ENCODE measurements at regions of chr18 and their contacts with region 1.

Region 1: DNA sequence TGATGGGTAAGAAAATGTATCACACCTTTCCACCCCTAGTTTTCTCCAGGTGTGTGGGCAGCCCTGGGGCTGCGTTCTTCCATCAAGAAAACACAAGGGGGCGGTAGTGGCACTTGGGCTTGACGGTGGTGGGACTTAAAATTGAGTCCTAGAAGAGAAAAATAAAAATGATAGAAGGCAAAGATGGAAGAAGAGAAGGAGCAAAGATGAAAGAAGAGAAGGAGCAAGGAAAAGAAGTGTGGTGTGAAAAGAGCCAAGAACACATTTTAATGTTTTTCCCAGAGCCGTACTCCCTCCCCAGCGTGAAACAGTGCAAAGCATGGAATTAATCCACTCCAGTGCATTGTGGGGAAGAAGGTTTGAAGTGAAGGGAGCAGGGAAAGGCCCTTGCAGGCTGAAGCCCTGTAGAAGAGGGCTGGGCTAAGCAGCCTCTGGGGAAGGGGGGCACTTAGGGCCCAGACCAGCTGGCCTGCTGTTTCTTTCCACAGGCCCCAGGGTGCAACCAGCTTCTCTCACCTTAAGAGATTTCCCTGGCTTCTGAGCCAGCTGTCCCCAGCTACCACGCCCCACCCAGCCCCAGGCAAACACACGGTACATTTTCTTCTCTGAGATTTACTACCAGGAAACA is 256.8 kb downstream of the RNF152 start:
- DNase-seq: peak; percentile 7 to 35 (median 31)
- H3K4me3 ChIP-seq: no peak overlapping the region
- H3K4me3 Mint-ChIP-seq: no peak overlapping the region
- H3K27ac ChIP-seq: no peak overlapping the region
- H3K27ac Mint-ChIP-seq: no peak overlapping the region
- H3K4me1 ChIP-seq: no peaks in the 10 kb centered on the region
- H3K4me1 Mint-ChIP-seq: no peaks in the 10 kb centered on the region
- H3K27me3 ChIP-seq: peaks cover 0 to 2% of the 10 kb centered on the region in 2 donors
- H3K27me3 Mint-ChIP-seq: peaks cover 0 to 14% (median 4%) of the 10 kb centered on the region in 3 donors
- CTCF ChIP-seq: peak; percentile 84

Region 2: DNA sequence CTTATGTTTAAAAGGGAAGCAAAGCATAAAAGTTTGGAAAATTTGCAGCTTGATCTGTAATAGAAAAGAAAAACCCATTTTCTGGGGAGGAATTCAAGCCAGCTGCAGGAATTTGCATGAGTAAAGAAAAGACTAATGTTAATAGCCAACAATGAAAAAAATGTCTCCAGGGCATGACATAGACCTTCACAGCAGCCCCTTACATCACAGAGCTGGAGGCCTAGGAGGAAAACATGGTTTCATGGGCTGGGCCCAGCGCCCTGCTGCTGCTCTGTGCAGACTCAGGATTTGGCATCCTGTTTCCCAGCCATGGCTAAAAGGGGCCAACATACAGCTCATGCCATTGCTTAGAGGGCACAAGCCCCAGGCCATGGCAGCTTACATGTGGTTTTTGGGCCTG is 851.9 kb before region 1 on chr18:
- intact Hi-C with region 1: no loop called
- DNase-seq: no peak
- H3K4me3 ChIP-seq: no peak overlapping the region
- H3K4me3 Mint-ChIP-seq: no peak overlapping the region
- H3K27ac ChIP-seq: no peak overlapping the region
- H3K27ac Mint-ChIP-seq: no peak overlapping the region
- H3K4me1 ChIP-seq: no peaks in the 10 kb centered on the region
- H3K4me1 Mint-ChIP-seq: no peaks in the 10 kb centered on the region
- H3K27me3 ChIP-seq: no peaks in the 10 kb centered on the region
- H3K27me3 Mint-ChIP-seq: no peaks in the 10 kb centered on the region
- CTCF ChIP-seq: no peak

Region 3: DNA sequence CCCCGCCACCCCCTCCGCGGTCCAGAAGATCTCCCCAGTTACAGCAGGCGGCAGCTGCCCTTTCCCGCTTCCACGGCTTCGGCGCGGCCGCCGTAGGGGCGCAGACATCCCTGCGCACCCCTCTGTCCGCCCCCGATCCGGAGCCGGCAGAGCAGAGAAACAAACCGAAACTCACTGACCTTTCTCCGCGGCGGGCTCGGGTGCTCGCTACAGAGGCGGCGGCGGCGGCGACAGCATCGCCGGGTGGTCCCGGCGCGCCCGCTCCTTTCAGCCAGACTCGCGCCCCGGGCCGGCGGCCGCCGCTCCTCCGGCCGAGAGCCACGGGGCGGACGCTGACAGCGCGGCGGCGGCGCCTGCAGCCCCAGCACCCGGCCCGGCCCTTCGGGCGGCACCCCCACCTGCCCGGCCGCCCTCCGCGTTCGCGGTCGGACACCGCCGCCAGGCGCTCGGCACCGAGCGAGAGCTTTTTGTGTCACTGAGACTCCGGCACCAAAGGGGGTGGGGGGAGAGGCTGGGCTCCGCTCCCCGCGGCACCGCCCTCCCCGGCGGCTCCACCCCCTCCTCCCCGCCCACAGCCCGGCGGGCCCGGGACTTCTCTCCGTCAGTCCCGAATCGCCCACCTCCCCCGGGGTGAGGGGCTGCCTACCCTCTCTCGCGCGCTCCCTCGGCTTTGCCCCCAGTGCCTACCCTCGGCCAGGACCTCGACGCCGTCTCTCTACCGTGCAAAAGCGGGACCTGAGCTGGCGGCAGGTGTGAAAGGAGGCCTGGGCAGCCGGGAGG is 258.1 kb after region 1 on chr18:
- intact Hi-C with region 1: loop called in 1 of 2 experiments (anchors 10 kb)
- DNase-seq: peak; percentile 49 to 51 (median 50)
- H3K4me3 ChIP-seq: peak overlapping the region; percentile 52 to 76 (median 65)
- H3K4me3 Mint-ChIP-seq: peak overlapping the region; percentile 82 to 93
- H3K27ac ChIP-seq: no peak overlapping the region
- H3K27ac Mint-ChIP-seq: peak overlapping the region in 1 of 7 donors; percentile 32
- H3K4me1 ChIP-seq: peaks cover 16 to 20% of the 10 kb centered on the region in 2 donors
- H3K4me1 Mint-ChIP-seq: peaks cover 14% of the 10 kb centered on the region
- H3K27me3 ChIP-seq: peaks cover 70 to 78% of the 10 kb centered on the region in 2 donors
- H3K27me3 Mint-ChIP-seq: peaks cover 73 to 92% (median 86%) of the 10 kb centered on the region in 3 donors
- CTCF ChIP-seq: peak; percentile 16

Region 4: DNA sequence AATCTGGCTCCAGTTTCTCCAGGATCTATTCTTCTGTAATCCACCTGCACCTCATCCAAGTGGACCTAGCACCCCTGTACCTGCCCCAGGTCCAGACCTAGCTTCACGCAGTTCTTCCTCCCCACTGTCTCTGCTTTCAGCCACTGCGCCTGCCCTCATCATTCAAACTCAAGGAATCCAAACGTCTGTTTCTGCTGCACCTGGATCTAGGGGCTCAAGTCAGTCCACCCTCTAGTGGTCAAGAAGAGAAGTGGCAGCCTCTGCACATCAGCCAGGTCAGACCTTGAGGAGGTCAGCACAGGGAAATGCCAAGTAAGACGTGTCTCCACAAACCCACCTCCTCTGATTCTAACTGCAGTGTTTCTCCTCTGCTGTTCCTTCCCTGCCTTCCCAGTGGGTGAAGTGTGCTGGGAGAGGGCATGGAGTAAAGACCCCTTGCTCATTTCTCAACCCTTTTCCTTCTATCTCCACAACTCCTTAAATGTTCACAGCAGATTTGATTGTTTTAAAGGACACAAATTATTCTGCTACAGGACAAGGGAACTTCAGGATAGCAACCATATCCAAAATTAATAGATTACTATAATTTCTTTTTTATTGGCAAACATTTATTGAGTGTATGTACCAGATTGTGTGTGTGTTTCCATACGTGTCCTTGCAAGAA is 265.4 kb after region 1 on chr18:
- intact Hi-C with region 1: loop called (anchors 5 to 10 kb)
- DNase-seq: peak; percentile 25 to 55 (median 41)
- H3K4me3 ChIP-seq: no peak overlapping the region
- H3K4me3 Mint-ChIP-seq: peak overlapping the region in 1 of 2 donors; percentile 56
- H3K27ac ChIP-seq: no peak overlapping the region
- H3K27ac Mint-ChIP-seq: no peak overlapping the region
- H3K4me1 ChIP-seq: no peaks in the 10 kb centered on the region
- H3K4me1 Mint-ChIP-seq: peaks cover 3% of the 10 kb centered on the region
- H3K27me3 ChIP-seq: peaks cover 21 to 31% of the 10 kb centered on the region in 2 donors
- H3K27me3 Mint-ChIP-seq: peaks cover 37 to 55% (median 38%) of the 10 kb centered on the region in 3 donors
- CTCF ChIP-seq: peak; percentile 92

Region 5: DNA sequence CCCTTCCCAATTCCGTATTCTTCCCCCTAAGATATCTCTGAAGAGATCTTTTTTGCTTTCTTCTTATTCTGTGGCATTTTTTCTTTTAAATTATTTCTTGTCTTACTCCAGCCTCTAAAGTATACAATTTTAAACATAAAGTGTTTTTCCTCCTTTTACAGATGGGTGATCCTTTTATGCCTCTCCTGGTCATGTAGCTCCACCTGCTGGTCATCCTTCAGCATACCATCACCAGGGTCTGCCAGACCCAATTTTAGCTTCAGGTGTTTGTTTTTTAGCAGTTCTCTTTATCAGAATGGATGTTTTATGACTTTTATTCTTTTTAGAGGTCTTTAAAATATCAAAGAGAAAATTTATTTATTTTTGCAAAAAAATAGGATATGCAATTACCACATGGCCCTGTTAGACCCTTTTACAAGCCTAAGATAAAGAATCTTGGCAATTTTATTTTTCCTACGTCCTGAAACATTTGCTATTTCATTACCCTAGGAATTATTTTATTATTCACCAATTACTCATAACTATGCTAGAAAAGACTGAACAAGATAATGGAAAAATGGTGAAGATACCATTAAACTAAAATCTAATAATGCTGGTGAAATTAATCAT is 495.4 kb after region 1 on chr18:
- intact Hi-C with region 1: loop called (anchors 5 kb)
- DNase-seq: peak; percentile 40 to 65 (median 60)
- H3K4me3 ChIP-seq: no peak overlapping the region
- H3K4me3 Mint-ChIP-seq: no peak overlapping the region
- H3K27ac ChIP-seq: no peak overlapping the region
- H3K27ac Mint-ChIP-seq: no peak overlapping the region
- H3K4me1 ChIP-seq: peaks cover 4 to 10% of the 10 kb centered on the region in 2 donors
- H3K4me1 Mint-ChIP-seq: peaks cover 14% of the 10 kb centered on the region
- H3K27me3 ChIP-seq: no peaks in the 10 kb centered on the region
- H3K27me3 Mint-ChIP-seq: no peaks in the 10 kb centered on the region
- CTCF ChIP-seq: peak; percentile 99

Measured in CD14-positive monocyte (primary cell).